ENCODE measurements at regions of chr16 and their contacts with region 1.

Region 1: GRCh38 chr16:31458844-31459721 is at the start of gene ARMC5:
- DNase-seq: peak; percentile 90
- CTCF ChIP-seq: peak; percentile 78

Region 2: DNA sequence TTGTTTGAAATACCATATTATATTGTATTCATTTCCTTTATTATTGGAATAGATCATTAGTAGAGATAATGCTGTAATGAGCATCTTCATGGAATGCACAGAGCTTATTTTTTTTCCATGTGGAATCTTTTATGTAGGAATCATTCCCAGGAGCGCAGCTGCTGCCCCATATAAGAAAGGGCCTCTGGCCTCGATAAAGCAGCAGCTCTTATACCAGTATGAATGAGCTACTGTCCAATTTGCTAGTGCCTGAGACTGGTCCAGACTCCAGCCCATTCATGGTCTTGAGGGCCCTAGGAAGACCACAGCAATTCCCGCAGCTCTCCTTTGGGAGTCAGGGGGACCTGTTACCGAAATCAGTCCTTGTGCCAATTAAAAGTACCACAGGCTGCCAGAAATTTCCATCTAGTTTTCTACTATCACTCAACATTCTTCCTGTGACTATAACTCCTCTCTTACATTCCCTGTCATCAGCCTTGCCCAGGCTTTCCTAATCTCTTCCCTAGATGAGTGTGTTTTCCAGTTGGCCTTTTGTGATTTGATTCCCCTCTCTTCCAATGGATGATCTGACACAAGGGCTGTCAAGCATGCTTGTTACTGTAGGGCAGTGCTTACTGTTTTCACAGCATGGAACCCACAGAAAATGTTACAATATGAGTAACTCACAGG is 18.4 kb before region 1 on chr16:
- CTCF ChIA-PET with region 1: interaction called, 105 read pairs
- POLR2A ChIA-PET with region 1: no interaction called
- DNase-seq: no peak
- CTCF ChIP-seq: no peak

Region 3: GRCh38 chr16:31476303-31477219 is 17.5 kb after region 1 on chr16:
- CTCF ChIA-PET with region 1: interaction called, 21 read pairs
- POLR2A ChIA-PET with region 1: interaction called, 3 read pairs
- DNase-seq: peak; percentile 90
- CTCF ChIP-seq: no peak

Region 4: DNA sequence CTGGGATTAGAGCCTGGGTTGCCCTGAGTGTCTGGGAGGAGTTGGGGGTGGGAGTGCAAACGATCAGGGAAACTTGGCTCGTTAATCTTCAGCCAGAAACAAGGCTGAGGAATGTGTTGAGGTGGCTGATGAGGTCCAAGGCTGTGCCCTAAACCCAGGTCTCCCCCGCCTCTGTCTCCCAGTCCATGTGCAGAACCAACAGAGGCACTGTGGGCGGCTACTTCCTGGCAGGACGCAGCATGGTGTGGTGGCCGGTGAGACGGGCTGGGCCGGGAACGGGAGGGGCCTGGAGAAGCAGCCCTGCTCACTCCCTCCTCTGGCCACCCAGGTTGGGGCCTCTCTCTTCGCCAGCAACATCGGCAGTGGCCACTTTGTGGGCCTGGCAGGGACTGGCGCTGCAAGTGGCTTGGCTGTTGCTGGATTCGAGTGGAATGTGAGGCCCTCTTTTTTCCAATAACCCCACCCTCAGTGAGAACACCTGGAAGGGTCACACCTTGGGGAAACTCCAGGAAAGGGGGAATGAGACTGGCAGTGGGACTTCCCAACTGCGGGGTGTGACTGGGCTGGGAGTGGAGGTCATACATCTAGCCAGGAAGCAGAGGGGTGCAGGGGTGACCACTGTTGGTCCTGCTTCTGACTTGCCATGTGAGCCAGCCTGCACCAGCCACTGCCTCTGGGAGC is 25.5 kb after region 1 on chr16:
- CTCF ChIA-PET with region 1: interaction called, 21 read pairs
- POLR2A ChIA-PET with region 1: no interaction called
- DNase-seq: no peak
- CTCF ChIP-seq: no peak

Region 5: GRCh38 chr16:31507929-31508705 is 49.0 kb after region 1 on chr16 and contains the start of gene RUSF1:
- CTCF ChIA-PET with region 1: interaction called, 11 read pairs
- POLR2A ChIA-PET with region 1: no interaction called
- DNase-seq: peak; percentile 92
- CTCF ChIP-seq: no peak

Region 6: DNA sequence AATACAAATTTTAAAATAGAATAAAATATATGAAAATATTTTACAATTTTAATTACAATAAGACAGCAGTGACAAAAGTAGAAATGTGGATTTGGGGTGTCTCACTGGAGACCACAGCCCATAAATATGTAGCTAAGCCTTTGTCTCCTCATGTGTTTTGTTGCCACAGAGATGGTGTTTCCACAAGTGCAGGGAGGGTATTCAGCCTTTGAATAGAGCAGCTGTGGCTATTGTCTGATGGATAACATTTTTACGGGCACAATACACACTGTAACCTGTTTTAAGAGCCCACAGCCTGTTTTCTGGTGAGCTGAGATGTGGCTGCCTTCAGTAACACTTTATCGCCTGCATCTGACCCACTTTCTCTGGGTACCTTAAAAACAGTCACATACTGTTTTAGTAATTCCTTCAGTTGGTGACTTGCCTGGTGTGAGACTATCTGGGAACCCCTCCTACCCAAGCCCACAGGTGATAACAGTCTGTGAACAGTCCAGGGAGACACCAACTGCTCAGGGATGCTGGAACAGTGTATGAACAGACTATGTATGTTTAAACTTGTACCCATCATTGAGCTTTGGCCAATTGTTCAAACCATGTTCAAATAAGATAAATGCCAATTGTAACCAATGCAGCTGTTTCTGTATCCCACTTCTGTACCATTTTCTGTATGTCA is 60.8 kb after region 1 on chr16:
- CTCF ChIA-PET with region 1: no interaction called
- POLR2A ChIA-PET with region 1: no interaction called
- DNase-seq: no peak
- CTCF ChIP-seq: no peak

Region 7: GRCh38 chr16:31868691-31869167 is 409.6 kb after region 1 on chr16:
- CTCF ChIA-PET with region 1: interaction called, 31 read pairs
- POLR2A ChIA-PET with region 1: no interaction called
- DNase-seq: peak; percentile 61
- CTCF ChIP-seq: peak; percentile 75

Measured in GM10248 (cell line).